Right ventricle myocardium inferior (tissue), 1 donor: ENCODE measurements at regions of chr1 and their contacts with region 1.

Region 1: DNA sequence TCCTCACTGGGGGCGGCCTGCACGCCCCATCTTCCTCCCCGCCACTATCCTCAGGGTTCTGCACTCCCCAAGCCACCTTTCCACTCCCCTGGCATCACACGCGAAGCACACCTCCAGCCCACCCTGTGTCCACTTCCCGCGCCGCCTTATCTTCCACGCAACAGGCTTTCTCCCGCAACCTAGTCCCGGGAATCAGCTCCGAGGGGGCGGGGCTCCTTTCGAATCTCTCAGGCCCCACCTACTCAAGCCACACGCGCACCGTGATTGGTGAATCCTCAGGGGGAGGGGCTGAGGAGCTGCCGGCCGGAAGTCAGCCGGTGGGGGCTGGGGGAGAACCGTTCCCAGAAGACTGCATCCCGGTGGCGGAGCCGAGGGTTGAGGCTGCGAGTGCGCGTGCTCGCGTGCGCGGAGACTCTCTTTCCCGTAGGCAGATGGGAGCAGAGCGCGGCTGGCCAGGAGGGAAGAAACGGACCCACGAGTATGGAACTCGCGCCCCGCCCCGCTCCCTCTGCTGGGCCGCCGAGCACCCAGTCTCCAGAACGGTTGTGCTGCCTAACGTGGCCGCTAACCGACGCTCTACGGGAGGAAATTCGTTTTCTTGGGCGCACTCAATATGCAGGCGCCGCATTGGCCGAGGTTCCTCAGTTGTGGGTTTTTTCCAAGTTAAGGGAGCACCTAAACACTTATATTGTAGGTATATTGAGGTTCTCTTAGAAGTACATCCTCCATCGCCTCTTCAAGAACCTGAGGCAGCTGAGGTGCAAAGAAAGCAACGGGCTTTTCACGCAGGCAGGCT is at the start of gene PSRC1:
- DNase-seq: peak; percentile 97
- ATAC-seq: peak; percentile 99
- total RNA-seq, gene PSRC1: 1.2 TPM

Region 2: GRCh38 chr1:109249654-109250465 is 33.3 kb before region 1 on chr1:
- intact Hi-C with region 1: loop called (anchors 1 kb)
- DNase-seq: peak; percentile 58
- ATAC-seq: no peak

Region 3: DNA sequence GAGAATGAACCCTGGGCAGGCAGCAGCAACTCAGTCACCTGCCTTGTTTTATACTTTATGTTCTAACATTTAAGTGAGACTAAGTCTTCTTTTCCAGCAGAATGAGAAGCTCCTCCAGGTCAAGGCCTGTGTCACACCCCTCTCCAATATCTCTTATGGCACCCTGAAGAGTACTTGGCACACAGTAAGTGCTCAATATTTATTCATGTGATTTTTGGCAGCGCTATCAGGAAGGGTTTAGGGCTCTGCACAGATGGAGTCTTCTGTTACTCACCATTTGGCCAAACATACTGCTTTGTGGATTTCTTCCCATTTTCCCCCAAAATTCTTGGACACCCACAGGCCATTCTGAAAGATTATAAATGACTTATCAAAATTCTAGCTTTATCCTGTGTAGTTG is 67.5 kb after region 1 on chr1:
- intact Hi-C with region 1: loop called (anchors 5 kb)
- DNase-seq: no peak
- ATAC-seq: no peak